Naive thymus-derived CD4-positive, alpha-beta T cell (primary cell): ENCODE measurements at regions of chr6 and their contacts with region 1.

Region 1: DNA sequence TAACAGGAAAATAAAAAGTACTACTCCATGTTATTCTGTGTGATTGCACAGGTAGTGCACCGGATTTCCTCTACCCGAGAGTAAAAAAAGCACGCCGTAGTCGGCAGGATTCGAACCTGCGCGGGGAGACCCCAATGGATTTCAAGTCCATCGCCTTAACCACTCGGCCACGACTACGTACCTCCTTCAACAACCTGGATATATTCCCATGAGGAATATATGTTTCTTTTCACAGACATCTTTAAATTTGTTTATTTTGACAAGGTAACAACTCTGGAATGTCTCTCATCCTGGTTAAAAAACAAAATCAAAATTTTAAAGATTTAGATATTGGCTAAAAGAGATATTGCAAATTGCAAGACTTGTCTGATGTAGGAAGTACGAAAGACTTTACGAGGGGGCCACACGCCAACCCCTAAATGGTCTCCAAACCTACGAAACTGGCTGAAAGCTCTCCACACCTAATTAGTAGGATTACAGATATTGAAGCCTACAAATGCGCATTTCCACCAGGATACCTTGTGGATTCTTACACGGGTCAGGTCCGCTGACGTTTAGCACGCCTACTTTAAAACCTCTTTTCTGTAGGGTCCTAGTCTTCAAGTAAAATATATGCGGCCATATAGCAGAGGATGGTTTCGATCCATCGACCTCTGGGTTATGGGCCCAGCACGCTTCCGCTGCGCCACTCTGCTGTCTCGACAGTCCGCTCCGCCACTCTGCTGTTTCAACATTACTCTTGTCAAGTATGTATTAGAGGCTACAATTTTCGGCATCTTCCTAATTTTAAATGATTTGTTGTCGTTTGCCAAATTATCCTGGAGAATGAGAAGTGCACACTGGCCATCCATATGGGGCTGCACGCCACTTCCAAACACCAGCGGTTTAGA is 52.3 kb upstream of the BTN3A2 start:
- DNase-seq: peak; percentile 64 to 91 (median 86)
- ATAC-seq: peak; percentile 75
- H3K4me3 ChIP-seq: peak overlapping the region; percentile 81
- H3K4me3 Mint-ChIP-seq: peak overlapping the region; percentile 83 to 100 (median 96)
- H3K27ac ChIP-seq: peak overlapping the region; percentile 55
- H3K27ac Mint-ChIP-seq: peak overlapping the region; percentile 82 to 100 (median 96)
- H3K4me1 ChIP-seq: peaks cover 4 to 19% of the 10 kb centered on the region in 2 donors
- H3K4me1 Mint-ChIP-seq: peaks cover 5 to 51% (median 37%) of the 10 kb centered on the region in 7 donors
- H3K27me3 ChIP-seq: no peaks in the 10 kb centered on the region
- H3K27me3 Mint-ChIP-seq: peaks cover 0 to 8% (median 0%) of the 10 kb centered on the region in 5 donors

Region 2: GRCh38 chr6:26065952-26066380 is 246.8 kb before region 1 on chr6:
- CTCF ChIA-PET with region 1: no interaction called
- POLR2A ChIA-PET with region 1: no interaction called
- intact Hi-C with region 1: no loop called
- DNase-seq: peak in 7 of 9 donors; percentile 51 to 74 (median 61)
- ATAC-seq: peak; percentile 97
- H3K4me3 ChIP-seq: no peak overlapping the region
- H3K4me3 Mint-ChIP-seq: no peak overlapping the region
- H3K27ac ChIP-seq: no peak overlapping the region
- H3K27ac Mint-ChIP-seq: no peak overlapping the region
- H3K4me1 ChIP-seq: no peaks in the 10 kb centered on the region
- H3K4me1 Mint-ChIP-seq: peaks cover 1 to 22% (median 11%) of the 10 kb centered on the region in 7 donors
- H3K27me3 ChIP-seq: no peaks in the 10 kb centered on the region
- H3K27me3 Mint-ChIP-seq: peaks cover 0 to 39% (median 0%) of the 10 kb centered on the region in 5 donors

Region 3: DNA sequence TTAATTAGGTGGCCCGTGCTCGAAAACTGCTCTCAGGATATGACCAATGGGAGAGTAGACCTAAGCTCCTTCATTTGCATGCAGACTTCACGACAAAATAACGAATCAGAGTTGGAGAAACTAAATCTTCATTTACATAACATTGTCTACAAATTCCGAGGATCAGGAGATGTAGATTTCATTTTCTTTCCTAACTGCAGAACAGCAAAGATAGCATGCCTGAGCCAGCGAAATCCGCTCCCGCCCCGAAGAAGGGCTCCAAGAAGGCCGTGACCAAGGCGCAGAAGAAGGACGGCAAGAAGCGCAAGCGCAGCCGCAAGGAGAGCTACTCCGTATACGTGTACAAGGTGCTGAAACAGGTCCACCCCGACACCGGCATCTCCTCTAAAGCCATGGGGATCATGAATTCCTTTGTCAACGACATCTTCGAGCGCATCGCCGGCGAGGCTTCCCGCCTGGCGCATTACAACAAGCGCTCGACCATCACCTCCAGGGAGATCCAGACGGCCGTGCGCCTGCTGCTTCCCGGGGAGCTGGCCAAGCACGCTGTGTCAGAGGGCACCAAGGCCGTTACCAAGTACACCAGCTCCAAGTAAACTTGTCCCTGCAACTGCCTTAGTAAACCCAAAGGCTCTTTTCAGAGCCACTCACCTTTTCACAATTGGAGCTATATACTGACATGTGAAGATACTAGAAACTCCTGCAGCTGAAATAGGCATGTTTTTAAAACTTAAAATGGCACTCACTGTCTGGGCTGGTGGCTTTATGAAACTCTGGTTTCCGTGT is 129.0 kb before region 1 on chr6:
- CTCF ChIA-PET with region 1: no interaction called
- POLR2A ChIA-PET with region 1: interaction called, 3 read pairs
- intact Hi-C with region 1: loop called (anchors 1 to 5 kb)
- DNase-seq: peak; percentile 43 to 83 (median 77)
- ATAC-seq: peak; percentile 91
- H3K4me3 ChIP-seq: peak overlapping the region; percentile 82
- H3K4me3 Mint-ChIP-seq: peak overlapping the region; percentile 84 to 99 (median 98)
- H3K27ac ChIP-seq: peak overlapping the region; percentile 76
- H3K27ac Mint-ChIP-seq: peak overlapping the region; percentile 83 to 99 (median 90)
- H3K4me1 ChIP-seq: peaks cover 13 to 30% of the 10 kb centered on the region in 2 donors
- H3K4me1 Mint-ChIP-seq: peaks cover 19 to 59% (median 49%) of the 10 kb centered on the region in 7 donors
- H3K27me3 ChIP-seq: no peaks in the 10 kb centered on the region
- H3K27me3 Mint-ChIP-seq: no peaks in the 10 kb centered on the region

Region 4: DNA sequence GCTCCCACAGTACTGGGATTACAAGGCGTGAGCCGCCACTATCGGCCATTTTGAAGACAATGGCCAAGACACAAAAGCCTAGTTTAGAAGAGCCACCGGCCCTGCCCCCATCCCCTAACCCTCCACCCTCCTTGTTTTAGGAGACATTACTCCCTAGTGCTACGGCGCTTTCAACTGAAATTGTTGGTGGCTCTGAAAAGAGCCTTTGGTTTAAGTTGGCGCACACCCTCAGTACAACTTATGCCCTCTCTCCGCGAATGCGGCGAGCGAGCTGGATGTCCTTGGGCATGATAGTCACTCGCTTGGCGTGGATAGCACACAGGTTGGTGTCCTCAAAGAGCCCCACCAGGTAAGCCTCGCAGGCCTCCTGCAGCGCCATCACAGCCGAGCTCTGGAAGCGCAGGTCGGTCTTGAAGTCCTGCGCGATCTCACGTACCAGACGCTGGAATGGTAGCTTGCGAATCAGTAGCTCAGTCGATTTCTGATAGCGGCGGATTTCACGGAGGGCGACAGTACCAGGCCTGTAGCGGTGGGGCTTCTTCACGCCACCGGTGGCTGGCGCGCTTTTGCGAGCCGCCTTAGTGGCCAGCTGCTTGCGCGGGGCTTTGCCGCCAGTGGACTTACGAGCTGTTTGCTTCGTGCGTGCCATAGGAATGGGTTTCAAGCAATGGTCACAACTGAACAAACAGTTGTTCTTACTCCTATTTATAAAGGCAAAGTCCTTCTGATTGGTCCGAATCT is 62.6 kb before region 1 on chr6:
- CTCF ChIA-PET with region 1: no interaction called
- POLR2A ChIA-PET with region 1: interaction called, 4 read pairs
- intact Hi-C with region 1: loop called (anchors 2 kb)
- DNase-seq: peak; percentile 53 to 85 (median 80)
- ATAC-seq: peak; percentile 85
- H3K4me3 ChIP-seq: peak overlapping the region; percentile 84
- H3K4me3 Mint-ChIP-seq: peak overlapping the region; percentile 88 to 100 (median 96)
- H3K27ac ChIP-seq: peak overlapping the region; percentile 71
- H3K27ac Mint-ChIP-seq: peak overlapping the region; percentile 85 to 97 (median 94)
- H3K4me1 ChIP-seq: peaks cover 4 to 19% of the 10 kb centered on the region in 2 donors
- H3K4me1 Mint-ChIP-seq: peaks cover 20 to 48% (median 39%) of the 10 kb centered on the region in 7 donors
- H3K27me3 ChIP-seq: no peaks in the 10 kb centered on the region
- H3K27me3 Mint-ChIP-seq: no peaks in the 10 kb centered on the region

Region 5: GRCh38 chr6:26532699-26533531 is 220.2 kb after region 1 on chr6:
- CTCF ChIA-PET with region 1: no interaction called
- POLR2A ChIA-PET with region 1: interaction called, 4 read pairs
- intact Hi-C with region 1: loop called (anchors 1 kb)
- DNase-seq: peak; percentile 67 to 94 (median 93)
- ATAC-seq: peak; percentile 57
- H3K4me3 ChIP-seq: peak overlapping the region; percentile 93
- H3K4me3 Mint-ChIP-seq: peak overlapping the region; percentile 83 to 99 (median 96)
- H3K27ac ChIP-seq: peak overlapping the region; percentile 72
- H3K27ac Mint-ChIP-seq: peak overlapping the region; percentile 88 to 98 (median 97)
- H3K4me1 ChIP-seq: peaks cover 14 to 23% of the 10 kb centered on the region in 2 donors
- H3K4me1 Mint-ChIP-seq: peaks cover 17 to 70% (median 45%) of the 10 kb centered on the region in 7 donors
- H3K27me3 ChIP-seq: no peaks in the 10 kb centered on the region
- H3K27me3 Mint-ChIP-seq: peaks cover 0 to 7% (median 0%) of the 10 kb centered on the region in 5 donors

Region 6: GRCh38 chr6:26568601-26569432 is 256.1 kb after region 1 on chr6:
- CTCF ChIA-PET with region 1: interaction called, 8 read pairs
- POLR2A ChIA-PET with region 1: interaction called, 4 read pairs
- intact Hi-C with region 1: loop called in 1 of 2 experiments (anchors 1 kb)
- DNase-seq: peak; percentile 96 to 99 (median 98)
- ATAC-seq: peak; percentile 84
- H3K4me3 ChIP-seq: peak overlapping the region; percentile 90
- H3K4me3 Mint-ChIP-seq: peak overlapping the region; percentile 90 to 100 (median 95)
- H3K27ac ChIP-seq: peak overlapping the region; percentile 74
- H3K27ac Mint-ChIP-seq: peak overlapping the region; percentile 96 to 100 (median 99)
- H3K4me1 ChIP-seq: peaks cover 0 to 3% of the 10 kb centered on the region in 2 donors
- H3K4me1 Mint-ChIP-seq: peaks cover 11 to 42% (median 26%) of the 10 kb centered on the region in 7 donors
- H3K27me3 ChIP-seq: no peaks in the 10 kb centered on the region
- H3K27me3 Mint-ChIP-seq: peaks cover 0 to 12% (median 0%) of the 10 kb centered on the region in 5 donors